Posterior vena cava (tissue), 2 donors: ENCODE measurements at regions of chr15 and their contacts with region 1.

Region 1: GRCh38 chr15:93413745-93414144 is 324.7 kb upstream of the RGMA start:
- DNase-seq: no peak

Region 2: GRCh38 chr15:93372221-93372869 is 41.4 kb before region 1 on chr15:
- intact Hi-C with region 1: loop called in 1 of 2 experiments (anchors 1 kb)
- DNase-seq: no peak

Region 3: GRCh38 chr15:93478947-93479346 is 65.2 kb after region 1 on chr15:
- intact Hi-C with region 1: no loop called
- DNase-seq: no peak